Naive thymus-derived CD8-positive, alpha-beta T cell (primary cell): ENCODE measurements at regions of chr9 and their contacts with region 1.

Region 1: DNA sequence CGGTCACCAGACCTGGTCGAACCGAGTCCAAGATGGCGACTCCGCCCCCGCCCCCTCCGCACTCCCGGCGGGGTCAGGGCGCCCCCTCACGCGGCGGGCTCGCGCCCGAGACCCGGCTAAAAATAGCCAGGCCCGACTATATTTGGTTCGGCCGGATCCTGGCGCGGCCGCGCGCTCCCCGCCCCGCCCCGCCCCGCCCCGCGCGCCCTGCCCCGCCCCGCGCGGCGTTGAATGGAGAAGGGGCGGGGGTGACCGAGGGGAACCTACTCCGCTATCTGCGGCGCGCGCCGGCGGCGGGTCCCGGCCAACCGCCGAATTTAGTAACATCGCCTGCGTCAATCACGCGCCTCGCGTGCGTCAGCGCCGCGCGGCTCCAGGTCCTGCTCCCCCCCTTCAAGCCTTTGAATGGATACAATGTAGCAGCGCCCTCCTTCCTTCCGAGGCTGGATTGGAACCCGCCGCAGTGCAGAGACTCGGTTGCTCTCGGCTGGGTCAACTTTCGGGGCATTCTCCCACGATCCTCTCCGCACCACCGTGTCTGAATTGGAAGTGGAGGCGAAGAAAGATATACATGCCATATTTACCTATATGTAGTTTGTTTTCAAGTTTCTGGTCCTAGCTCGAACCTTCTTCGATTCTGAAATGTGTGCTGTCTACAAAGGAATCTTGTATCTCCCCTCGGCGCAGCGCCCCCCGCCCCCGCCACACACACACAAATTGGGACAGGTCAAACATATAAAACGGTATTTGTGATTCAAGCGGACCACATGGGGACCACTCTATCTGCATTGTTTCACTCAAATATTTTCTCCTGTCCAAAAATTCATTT is 1.6 kb upstream of the NR4A3 start:
- DNase-seq: peak; percentile 87 to 96 (median 95)
- ATAC-seq: peak; percentile 47 to 52
- H3K4me3 Mint-ChIP-seq: peak overlapping the region; percentile 91 to 99 (median 98)
- H3K27ac Mint-ChIP-seq: peak overlapping the region; percentile 92 to 100 (median 99)
- H3K4me1 Mint-ChIP-seq: peaks cover 33 to 60% (median 51%) of the 10 kb centered on the region in 4 donors
- H3K27me3 Mint-ChIP-seq: peaks cover 5 to 32% (median 25%) of the 10 kb centered on the region in 5 donors

Region 2: GRCh38 chr9:99803694-99804093 is 16.4 kb before region 1 on chr9:
- POLR2A ChIA-PET with region 1: no interaction called
- DNase-seq: no peak
- ATAC-seq: no peak
- H3K4me3 Mint-ChIP-seq: no peak overlapping the region
- H3K27ac Mint-ChIP-seq: no peak overlapping the region
- H3K4me1 Mint-ChIP-seq: peaks cover 4 to 11% (median 4%) of the 10 kb centered on the region in 4 donors
- H3K27me3 Mint-ChIP-seq: peaks cover 0 to 2% (median 0%) of the 10 kb centered on the region in 5 donors

Region 3: DNA sequence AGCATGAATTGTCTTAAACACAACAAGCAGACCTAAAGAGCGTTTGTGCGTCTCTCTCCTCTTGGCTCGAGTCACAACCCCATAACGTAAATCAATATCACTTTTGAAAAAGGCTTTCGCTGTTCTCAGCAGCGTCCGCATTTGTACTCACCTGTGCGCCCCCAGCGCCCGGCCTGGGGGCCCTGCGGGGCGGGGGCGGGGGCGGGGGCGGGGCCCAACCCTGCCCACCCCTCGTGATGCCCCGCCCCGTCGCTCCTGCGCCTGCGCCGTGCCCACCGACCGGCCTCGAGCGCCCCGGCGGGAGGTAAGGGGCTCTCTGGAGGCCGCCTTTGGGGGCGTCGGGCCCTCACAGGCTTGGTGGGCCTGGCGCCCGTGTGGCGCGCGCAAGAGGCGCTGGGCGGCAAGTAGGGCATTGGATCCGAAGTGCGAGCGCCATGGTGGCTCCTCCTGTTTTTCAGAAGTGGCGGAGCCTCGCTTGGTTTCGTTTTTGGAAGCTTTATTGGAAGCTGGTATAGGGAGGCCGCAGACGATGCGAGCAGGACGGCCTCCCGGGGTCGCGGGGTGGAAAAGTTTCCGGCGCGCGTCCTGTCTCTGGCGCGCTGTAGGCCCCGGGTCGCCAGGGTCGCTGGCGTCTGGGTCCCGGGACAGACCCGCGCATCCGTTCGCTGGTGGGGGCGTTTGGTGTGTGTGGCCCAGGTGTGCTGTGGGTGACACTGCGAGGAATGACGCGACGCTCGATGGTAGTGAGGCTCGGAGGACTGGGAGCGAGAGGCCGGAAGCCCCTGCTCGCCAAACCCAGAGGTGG is 86.5 kb after region 1 on chr9 and contains the start of gene STX17:
- POLR2A ChIA-PET with region 1: interaction called, 28 read pairs
- DNase-seq: peak; percentile 74 to 95 (median 86)
- ATAC-seq: peak; percentile 82 to 87
- H3K4me3 Mint-ChIP-seq: peak within 1 kb of the TSS; percentile 95 to 99 (median 98)
- H3K27ac Mint-ChIP-seq: peak within 1 kb of the TSS; percentile 96 to 100 (median 99)
- H3K4me1 Mint-ChIP-seq: peaks cover 13 to 40% (median 33%) of the 10 kb centered on the region in 4 donors
- H3K27me3 Mint-ChIP-seq: peaks cover 0 to 15% (median 4%) of the 10 kb centered on the region in 5 donors
- polyA plus RNA-seq, gene STX17: 28.4 to 33.9 (median 33.2) TPM